Activated T-helper 1 cell treated with anti-CD3 and anti-CD28 coated beads, Interleukin-12 subunit alpha, Interleukin-12 subunit beta, Interleukin-2, Interleukin-4 antibody, amounts not matched to agents 30 ng/mL and 10 ng/mL and 1 ng/mL, durations not matched to agents 14 hours and 24 hours and 36 hours (primary cell): ENCODE measurements at regions of chr12 and their contacts with region 1.

Region 1: GRCh38 chr12:4276524-4277204 is 3.1 kb downstream of the CCND2 start:
- DNase-seq: peak; percentile 79
- H3K4me3 Mint-ChIP-seq: peak overlapping the region; percentile 94
- H3K27ac Mint-ChIP-seq: peak overlapping the region; percentile 96
- H3K4me1 Mint-ChIP-seq: peaks cover 57% of the 10 kb centered on the region
- H3K27me3 Mint-ChIP-seq: no peaks in the 10 kb centered on the region

Region 2: GRCh38 chr12:3752741-3753486 is 523.8 kb before region 1 on chr12 and contains the start of gene CRACR2A:
- intact Hi-C with region 1: loop called (anchors 10 kb)
- DNase-seq: peak; percentile 79
- H3K4me3 Mint-ChIP-seq: peak within 1 kb of the TSS; percentile 94
- H3K27ac Mint-ChIP-seq: peak within 1 kb of the TSS; percentile 98
- H3K4me1 Mint-ChIP-seq: peaks cover 57% of the 10 kb centered on the region
- H3K27me3 Mint-ChIP-seq: no peaks in the 10 kb centered on the region
- total RNA-seq, gene CRACR2A: 28.0 and 30.0 TPM in 2 replicates

Region 3: GRCh38 chr12:3973978-3974644 is 302.6 kb before region 1 on chr12:
- intact Hi-C with region 1: loop called (anchors 1 kb)
- DNase-seq: no peak
- H3K4me3 Mint-ChIP-seq: peak overlapping the region; percentile 49
- H3K27ac Mint-ChIP-seq: peak overlapping the region; percentile 56
- H3K4me1 Mint-ChIP-seq: peaks cover 56% of the 10 kb centered on the region
- H3K27me3 Mint-ChIP-seq: no peaks in the 10 kb centered on the region

Region 4: DNA sequence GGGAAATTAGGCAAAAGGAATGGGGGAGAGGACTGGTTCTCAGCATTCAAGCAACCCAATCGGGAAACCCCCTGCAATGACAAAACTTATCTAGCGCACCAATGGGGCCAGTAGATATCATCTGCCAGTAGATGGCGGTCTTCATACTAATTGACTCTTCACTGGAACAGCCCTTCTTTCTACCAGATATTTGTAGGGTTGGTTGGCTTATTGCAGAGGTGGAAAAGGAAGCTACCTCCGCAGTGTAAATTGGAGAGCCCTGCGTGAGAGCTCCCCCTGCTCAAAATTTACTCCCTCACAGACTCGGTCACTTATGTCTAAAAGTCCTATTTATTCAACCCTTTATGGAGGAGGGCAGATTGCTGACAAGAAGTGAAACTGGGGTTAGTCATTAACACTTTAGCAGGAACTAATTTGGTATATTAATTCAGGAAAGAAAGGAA is 169.2 kb before region 1 on chr12:
- intact Hi-C with region 1: loop called (anchors 1 kb)
- DNase-seq: peak; percentile 75
- H3K4me3 Mint-ChIP-seq: peak overlapping the region; percentile 59
- H3K27ac Mint-ChIP-seq: peak overlapping the region; percentile 94
- H3K4me1 Mint-ChIP-seq: peaks cover 58% of the 10 kb centered on the region
- H3K27me3 Mint-ChIP-seq: peaks cover 4% of the 10 kb centered on the region

Region 5: DNA sequence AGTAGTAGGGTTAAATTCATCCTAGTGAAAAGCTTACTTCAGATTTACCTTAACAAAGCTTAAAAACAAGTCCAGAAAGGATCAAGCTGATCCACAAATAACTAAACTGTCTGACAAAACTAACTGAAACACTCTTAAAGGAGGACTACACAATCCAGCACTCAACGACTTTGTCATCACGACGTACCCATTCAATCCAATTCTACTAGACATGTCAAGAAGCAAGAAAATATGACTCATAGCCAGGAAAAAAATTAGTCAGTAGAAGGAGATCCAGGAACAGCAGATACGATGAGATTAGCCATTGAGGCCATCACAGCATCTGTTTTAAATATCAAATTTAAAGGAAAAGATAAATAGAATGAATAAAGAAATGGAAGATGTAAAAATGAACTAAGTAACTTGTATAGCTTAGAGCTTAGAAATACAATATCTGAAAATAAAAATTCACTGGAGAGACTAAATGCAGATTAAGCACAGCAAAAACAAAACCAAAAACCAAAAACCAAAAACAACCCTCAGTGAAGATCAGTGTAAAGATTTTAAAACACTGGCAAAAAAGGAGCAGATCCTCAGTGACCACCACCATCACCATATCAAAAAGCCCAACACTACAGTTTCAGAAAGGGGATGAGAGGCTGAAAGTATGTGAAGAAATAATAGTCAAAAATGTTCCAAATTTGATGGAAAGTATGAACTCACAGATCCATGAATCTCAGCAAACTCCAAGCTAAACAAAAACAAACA is 98.1 kb before region 1 on chr12:
- intact Hi-C with region 1: loop called (anchors 1 kb)
- DNase-seq: no peak
- H3K4me3 Mint-ChIP-seq: peak overlapping the region; percentile 41
- H3K27ac Mint-ChIP-seq: peak overlapping the region; percentile 75
- H3K4me1 Mint-ChIP-seq: peaks cover 21% of the 10 kb centered on the region
- H3K27me3 Mint-ChIP-seq: peaks cover 2% of the 10 kb centered on the region

Region 6: GRCh38 chr12:4251216-4251891 is 25.3 kb before region 1 on chr12:
- intact Hi-C with region 1: no loop called
- DNase-seq: no peak
- H3K4me3 Mint-ChIP-seq: no peak overlapping the region
- H3K27ac Mint-ChIP-seq: peak overlapping the region; percentile 35
- H3K4me1 Mint-ChIP-seq: peaks cover 22% of the 10 kb centered on the region
- H3K27me3 Mint-ChIP-seq: peaks cover 13% of the 10 kb centered on the region

Region 7: DNA sequence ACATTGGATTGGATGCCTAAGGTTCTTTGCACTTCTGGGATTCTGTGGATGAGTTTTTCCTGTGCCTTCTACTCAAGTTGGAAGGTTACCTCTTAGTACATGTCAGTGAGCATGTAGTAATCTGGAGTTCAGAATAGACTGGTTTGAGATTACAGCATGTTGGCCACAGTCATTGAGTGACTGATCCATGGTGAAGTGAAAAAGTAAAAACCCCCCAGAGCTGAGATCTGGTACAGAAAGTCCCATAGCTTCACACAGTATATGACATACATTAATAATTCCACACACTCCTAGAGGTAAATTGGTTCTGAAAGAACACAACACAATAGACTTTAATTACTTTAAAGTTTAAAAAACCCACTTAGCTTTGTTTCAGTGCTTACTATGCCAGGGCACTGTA is 15.0 kb before region 1 on chr12:
- intact Hi-C with region 1: no loop called
- DNase-seq: no peak
- H3K4me3 Mint-ChIP-seq: no peak overlapping the region
- H3K27ac Mint-ChIP-seq: no peak overlapping the region
- H3K4me1 Mint-ChIP-seq: peaks cover 7% of the 10 kb centered on the region
- H3K27me3 Mint-ChIP-seq: peaks cover 16% of the 10 kb centered on the region

Region 8: GRCh38 chr12:4320853-4321701 is 44.4 kb after region 1 on chr12 and contains the start of gene TIGAR:
- intact Hi-C with region 1: loop called (anchors 1 kb)
- DNase-seq: peak; percentile 93
- H3K4me3 Mint-ChIP-seq: peak within 1 kb of the TSS; percentile 93
- H3K27ac Mint-ChIP-seq: peak within 1 kb of the TSS; percentile 93
- H3K4me1 Mint-ChIP-seq: peaks cover 45% of the 10 kb centered on the region
- H3K27me3 Mint-ChIP-seq: no peaks in the 10 kb centered on the region
- total RNA-seq, gene TIGAR: 14.4 TPM in 2 replicates

Region 9: DNA sequence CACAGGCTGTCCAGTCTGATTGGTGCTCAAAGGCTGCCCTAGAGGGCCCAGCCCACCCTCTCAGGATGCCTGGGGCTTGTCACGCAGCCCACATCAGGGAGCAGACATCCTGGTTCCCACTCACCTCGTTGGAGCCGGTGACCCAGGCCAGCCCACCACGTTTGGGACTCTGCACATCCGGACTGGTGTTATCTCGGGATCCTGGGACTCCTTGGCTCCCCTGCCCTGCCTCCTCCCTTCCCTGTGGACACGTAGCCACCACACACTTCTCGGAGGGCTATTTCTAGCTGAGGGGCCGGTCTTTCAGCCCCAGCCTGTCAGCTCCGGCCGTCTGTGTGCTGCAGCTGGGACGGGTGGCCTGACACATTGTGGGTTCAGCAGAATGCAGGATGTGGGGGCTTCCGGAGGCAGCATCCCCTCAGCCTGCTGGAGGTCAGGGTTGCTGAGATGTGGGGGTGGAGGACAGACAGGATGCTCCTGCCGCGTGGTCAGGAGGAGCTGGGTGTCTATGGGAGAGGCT is 115.6 kb after region 1 on chr12:
- intact Hi-C with region 1: no loop called
- DNase-seq: no peak
- H3K4me3 Mint-ChIP-seq: no peak overlapping the region
- H3K27ac Mint-ChIP-seq: no peak overlapping the region
- H3K4me1 Mint-ChIP-seq: no peaks in the 10 kb centered on the region
- H3K27me3 Mint-ChIP-seq: peaks cover 34% of the 10 kb centered on the region